PC-3 (cell line): ENCODE measurements at regions of chr17 and their contacts with region 1.

Region 1: DNA sequence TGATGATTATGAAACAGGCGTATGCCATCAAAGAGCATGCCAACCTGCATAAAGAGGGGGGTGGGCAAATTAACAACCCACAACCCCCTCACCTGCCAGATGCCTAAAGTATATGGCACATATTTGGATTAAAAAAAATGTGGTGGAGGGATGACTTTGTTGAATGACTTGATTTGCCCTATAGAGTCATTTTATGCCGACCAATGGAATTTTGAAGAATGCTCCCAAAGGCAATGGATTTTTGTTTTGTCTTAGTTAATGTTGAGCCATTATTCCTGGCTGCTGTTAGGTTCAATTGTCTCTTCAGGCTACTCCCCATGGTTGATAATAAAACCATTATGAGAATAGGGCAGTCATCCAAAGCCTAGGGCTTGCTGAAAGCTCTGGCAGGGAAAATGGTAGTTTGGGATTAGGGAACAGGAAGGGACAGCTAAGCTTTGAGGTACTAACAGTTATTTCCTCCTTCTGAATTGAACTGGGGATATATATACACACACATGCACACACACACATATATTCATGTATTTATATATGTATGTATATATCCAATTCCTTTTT is 5.8 kb upstream of the CHCT1 start:
- DNase-seq: no peak
- ATAC-seq: no peak
- H3K4me3 ChIP-seq: no peak overlapping the region
- H3K27ac ChIP-seq: no peak overlapping the region
- H3K4me1 ChIP-seq: no peaks in the 10 kb centered on the region
- H3K27me3 ChIP-seq: no peaks in the 10 kb centered on the region
- CTCF ChIP-seq: no peak

Region 2: GRCh38 chr17:59451706-59452105 is 964.7 kb before region 1 on chr17:
- CTCF ChIA-PET with region 1: no interaction called
- POLR2A ChIA-PET with region 1: no interaction called
- intact Hi-C with region 1: no loop called
- DNase-seq: peak; percentile 68
- ATAC-seq: peak; percentile 72
- H3K4me3 ChIP-seq: no peak overlapping the region
- H3K27ac ChIP-seq: no peak overlapping the region
- H3K4me1 ChIP-seq: peaks cover 8% of the 10 kb centered on the region; the same call in 1 of the 2 replicates
- H3K27me3 ChIP-seq: no peaks in the 10 kb centered on the region
- CTCF ChIP-seq: no peak

Region 3: GRCh38 chr17:60142872-60143499 is 273.5 kb before region 1 on chr17:
- CTCF ChIA-PET with region 1: interaction called, 13 read pairs
- POLR2A ChIA-PET with region 1: no interaction called
- intact Hi-C with region 1: no loop called
- DNase-seq: peak; percentile 96
- ATAC-seq: peak; percentile 89
- H3K4me3 ChIP-seq: peak overlapping the region; percentile 62
- H3K27ac ChIP-seq: no peak overlapping the region
- H3K4me1 ChIP-seq: peaks cover 11% of the 10 kb centered on the region
- H3K27me3 ChIP-seq: peaks cover 4% of the 10 kb centered on the region; the same call in 1 of the 2 replicates
- CTCF ChIP-seq: peak; percentile 96

Region 4: GRCh38 chr17:60398227-60398959 is 18.1 kb before region 1 on chr17:
- CTCF ChIA-PET with region 1: no interaction called
- POLR2A ChIA-PET with region 1: no interaction called
- intact Hi-C with region 1: no loop called
- DNase-seq: no peak
- ATAC-seq: no peak
- H3K4me3 ChIP-seq: no peak overlapping the region
- H3K27ac ChIP-seq: no peak overlapping the region
- H3K4me1 ChIP-seq: peaks cover 1% of the 10 kb centered on the region
- H3K27me3 ChIP-seq: no peaks in the 10 kb centered on the region
- CTCF ChIP-seq: no peak

Region 5: GRCh38 chr17:60461584-60461983 is 45.1 kb after region 1 on chr17:
- CTCF ChIA-PET with region 1: no interaction called
- POLR2A ChIA-PET with region 1: interaction called, 11 read pairs
- intact Hi-C with region 1: no loop called
- DNase-seq: no peak
- ATAC-seq: no peak
- H3K4me3 ChIP-seq: no peak overlapping the region
- H3K27ac ChIP-seq: no peak overlapping the region
- H3K4me1 ChIP-seq: no peaks in the 10 kb centered on the region
- H3K27me3 ChIP-seq: no peaks in the 10 kb centered on the region
- CTCF ChIP-seq: no peak